ENCODE measurements at regions of chr3 and their contacts with region 1.

Region 1: DNA sequence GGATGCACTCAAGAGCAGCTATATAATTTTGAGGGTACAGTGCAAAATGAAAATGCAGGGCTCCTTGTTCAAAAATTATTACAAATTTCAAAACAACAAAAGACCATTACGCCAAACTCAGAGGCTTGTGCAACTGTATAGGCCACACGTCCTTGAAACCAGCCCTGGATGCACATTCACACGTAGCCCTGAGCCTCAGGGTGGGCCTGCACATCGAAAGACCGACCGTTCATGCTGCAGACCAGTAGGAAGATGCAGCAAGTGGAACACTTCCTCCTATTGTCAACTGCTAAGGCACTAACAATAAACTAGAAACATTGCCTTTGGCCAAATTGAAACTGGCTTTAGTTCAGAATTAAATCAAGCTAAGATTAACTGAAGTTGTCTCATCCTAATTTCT is 174.7 kb downstream of the SHOX2 start:
- DNase-seq: no peak
- H3K4me3 ChIP-seq: no peak overlapping the region
- CTCF ChIP-seq: no peak
- POLR2A ChIP-seq: no peak

Region 2: GRCh38 chr3:159907828-159908227 is 1976.3 kb after region 1 on chr3:
- intact Hi-C with region 1: loop called (anchors 5 kb)
- DNase-seq: no peak
- H3K4me3 ChIP-seq: no peak overlapping the region
- CTCF ChIP-seq: no peak
- POLR2A ChIP-seq: no peak

Measured in lower leg skin (tissue), 4 donors.